ENCODE measurements at regions of chr11 and their contacts with region 1.

Region 1: DNA sequence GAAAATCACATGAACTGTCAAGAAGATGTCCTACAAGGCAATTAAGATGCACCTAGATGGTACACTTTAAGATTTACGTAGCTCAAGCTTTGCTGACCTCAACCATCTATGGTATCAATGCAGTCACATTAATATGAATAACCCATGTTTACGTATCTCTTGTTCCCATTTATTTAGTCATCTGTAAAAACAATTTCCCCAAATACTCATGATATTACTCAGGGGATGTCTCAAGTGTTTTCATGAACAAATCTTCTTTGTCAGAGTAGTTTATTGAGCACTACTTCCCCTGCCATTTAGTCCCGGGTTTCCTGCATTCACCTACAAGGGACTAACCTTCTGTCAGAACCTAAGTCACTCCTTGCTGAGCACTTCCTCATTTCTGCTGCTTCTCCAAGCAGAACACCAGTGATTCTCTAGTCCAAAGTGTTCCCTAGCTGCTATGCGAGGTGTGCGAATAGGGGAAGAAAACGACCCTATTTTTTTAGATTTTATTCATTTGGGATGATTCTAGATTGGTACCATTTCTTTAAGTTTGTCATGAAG is 554.3 kb upstream of the LRRC4C start:
- DNase-seq: no peak
- ATAC-seq: no peak
- H3K4me3 ChIP-seq: no peak overlapping the region
- H3K27ac ChIP-seq: no peak overlapping the region
- H3K4me1 ChIP-seq: no peaks in the 10 kb centered on the region
- H3K27me3 ChIP-seq: no peaks in the 10 kb centered on the region
- CTCF ChIP-seq: no peak
- EP300 ChIP-seq: no peak
- POLR2A ChIP-seq: no peak
- RAD21 ChIP-seq: no peak

Region 2: DNA sequence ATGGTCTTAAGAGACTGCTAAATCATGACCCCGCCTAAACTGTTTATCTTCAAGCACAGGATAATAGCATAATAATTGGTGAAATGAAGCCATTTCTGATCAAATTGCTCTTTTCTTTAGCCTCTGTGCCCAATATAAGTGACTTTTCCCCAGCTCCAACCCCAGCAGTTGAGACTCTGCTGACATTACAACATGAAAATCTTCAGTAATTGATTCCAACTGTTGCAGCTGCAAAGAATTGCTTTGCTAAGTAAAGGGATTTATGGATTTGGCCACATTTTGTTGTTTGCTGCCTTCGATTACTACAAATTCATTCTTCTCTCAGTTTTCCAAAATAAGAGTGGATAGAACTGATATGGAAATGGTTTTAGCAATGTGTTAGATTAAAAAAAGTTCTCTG is 22.5 kb after region 1 on chr11:
- CTCF ChIA-PET with region 1: no interaction called
- POLR2A ChIA-PET with region 1: no interaction called
- in situ Hi-C with region 1: no loop called
- intact Hi-C with region 1: loop called (anchors 1 kb)
- DNase-seq: no peak
- ATAC-seq: no peak
- H3K4me3 ChIP-seq: no peak overlapping the region
- H3K27ac ChIP-seq: no peak overlapping the region
- H3K4me1 ChIP-seq: no peaks in the 10 kb centered on the region
- H3K27me3 ChIP-seq: no peaks in the 10 kb centered on the region
- CTCF ChIP-seq: no peak
- EP300 ChIP-seq: no peak
- POLR2A ChIP-seq: no peak
- RAD21 ChIP-seq: no peak

Measured in K562 (cell line).